Sigmoid colon (tissue), 7 donors: ENCODE measurements at regions of chr5 and their contacts with region 1.

Region 1: DNA sequence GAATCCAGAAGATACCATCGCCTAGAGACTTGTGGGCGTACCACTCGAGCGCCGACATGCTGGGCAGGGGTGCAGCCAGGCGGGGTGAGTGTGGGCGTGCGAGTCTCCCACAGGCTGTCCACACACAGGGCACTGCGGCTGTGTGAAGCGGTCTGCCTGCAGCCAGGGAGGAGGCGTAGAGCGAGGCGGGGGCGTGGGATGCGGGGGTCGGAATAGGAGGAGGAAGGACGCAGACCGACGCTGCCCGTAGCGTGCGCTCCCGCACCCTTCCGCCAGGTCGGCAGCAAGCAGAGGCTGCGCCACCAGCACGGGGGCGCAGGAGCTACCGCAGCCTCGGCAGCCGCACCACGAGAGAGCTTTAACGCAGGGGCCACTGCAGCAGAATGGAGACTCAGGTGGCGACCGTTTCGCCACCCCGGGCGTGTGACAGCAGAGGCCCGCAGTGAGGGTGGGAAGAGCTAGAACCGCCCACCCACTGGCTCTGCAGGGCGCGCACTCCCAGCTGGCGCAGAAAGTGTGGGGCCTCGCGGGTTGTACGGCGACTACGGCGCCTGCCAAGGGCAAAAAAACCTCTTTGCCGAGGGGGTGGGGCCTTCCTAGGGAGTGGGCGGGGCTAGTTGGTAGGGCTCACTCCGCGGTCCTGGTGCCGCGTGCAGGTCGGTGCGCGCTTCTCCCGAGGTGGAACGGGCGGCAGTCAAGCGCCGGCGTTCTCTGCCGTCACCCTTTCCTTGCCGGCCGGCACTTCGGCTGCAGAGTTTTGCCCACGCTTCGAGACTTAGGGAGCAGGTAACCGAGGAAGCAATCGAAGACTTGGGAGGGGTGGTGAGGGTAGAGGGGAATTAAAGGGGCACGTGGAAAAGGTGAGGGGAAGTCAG is at the starts of genes MBLAC2 and POLR3G:
- DNase-seq: peak; percentile 96
- H3K4me3 ChIP-seq: peak within 1 kb of the TSS; percentile 70 to 85 (median 80)
- H3K27ac ChIP-seq: peak within 1 kb of the TSS; percentile 77 to 83 (median 80)
- H3K4me1 ChIP-seq: peaks cover 0 to 28% (median 23%) of the 10 kb centered on the region in 4 donors
- H3K27me3 ChIP-seq: no peaks in the 10 kb centered on the region
- CTCF ChIP-seq: peak; percentile 50 to 65 (median 62)
- EP300 ChIP-seq: no peak
- POLR2A ChIP-seq: peak; percentile 50 to 66
- total RNA-seq, gene MBLAC2: 4.9 to 7.1 (median 6.1) TPM
- total RNA-seq, gene POLR3G: 1.1 to 5.8 (median 2.6) TPM

Region 2: GRCh38 chr5:90409318-90410177 is 64.9 kb before region 1 on chr5 and contains the start of gene CETN3:
- intact Hi-C with region 1: loop called (anchors 2 kb)
- DNase-seq: peak; percentile 97
- H3K4me3 ChIP-seq: peak within 1 kb of the TSS; percentile 70 to 85 (median 78)
- H3K27ac ChIP-seq: peak within 1 kb of the TSS; percentile 90 to 98 (median 96)
- H3K4me1 ChIP-seq: peaks cover 0 to 15% (median 10%) of the 10 kb centered on the region in 4 donors
- H3K27me3 ChIP-seq: no peaks in the 10 kb centered on the region
- CTCF ChIP-seq: no peak
- EP300 ChIP-seq: no peak
- POLR2A ChIP-seq: peak; percentile 74 to 86
- total RNA-seq, gene CETN3: 2.8 to 13.2 (median 7.7) TPM

Region 3: GRCh38 chr5:90421136-90421535 is 53.3 kb before region 1 on chr5:
- intact Hi-C with region 1: no loop called
- DNase-seq: no peak
- H3K4me3 ChIP-seq: no peak overlapping the region
- H3K27ac ChIP-seq: no peak overlapping the region
- H3K4me1 ChIP-seq: no peaks in the 10 kb centered on the region
- H3K27me3 ChIP-seq: no peaks in the 10 kb centered on the region
- CTCF ChIP-seq: no peak
- EP300 ChIP-seq: no peak
- POLR2A ChIP-seq: no peak

Region 4: GRCh38 chr5:90440644-90441043 is 33.8 kb before region 1 on chr5:
- intact Hi-C with region 1: loop called (anchors 2 kb)
- DNase-seq: no peak
- H3K4me3 ChIP-seq: no peak overlapping the region
- H3K27ac ChIP-seq: no peak overlapping the region
- H3K4me1 ChIP-seq: no peaks in the 10 kb centered on the region
- H3K27me3 ChIP-seq: no peaks in the 10 kb centered on the region
- CTCF ChIP-seq: no peak
- EP300 ChIP-seq: no peak
- POLR2A ChIP-seq: no peak